ENCODE measurements at regions of chr17 and their contacts with region 1.

Region 1: DNA sequence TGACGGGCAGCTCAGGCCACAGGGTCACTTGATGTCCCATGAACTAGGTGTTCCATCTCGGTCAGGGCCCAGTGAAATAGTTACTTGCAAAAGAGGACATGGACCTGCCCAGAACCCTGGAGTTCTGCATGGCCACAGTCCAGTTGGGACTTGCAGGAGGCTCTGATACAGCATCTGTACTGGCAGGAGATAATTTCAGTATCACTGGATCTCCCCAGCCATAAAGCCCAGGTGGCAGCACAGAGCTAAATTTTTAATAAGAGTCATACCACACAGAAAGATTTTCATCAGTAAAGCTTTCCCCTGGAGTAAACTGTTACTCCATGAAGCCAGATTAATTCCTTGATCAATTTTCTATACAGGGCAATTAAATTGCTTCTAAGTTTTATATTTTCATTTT is 18.0 kb upstream of the SLC16A5 start:
- DNase-seq: peak; percentile 68 to 78
- ATAC-seq: peak; percentile 80 to 83
- H3K4me3 ChIP-seq: no peak overlapping the region
- H3K27ac ChIP-seq: no peak overlapping the region; a peak in 1 of 6 replicates
- H3K4me1 ChIP-seq: peaks cover 3% of the 10 kb centered on the region; the same call in 1 of the 3 replicates
- CTCF ChIP-seq: peak; percentile 78
- EP300 ChIP-seq: no peak
- POLR2A ChIP-seq: no peak
- RAD21 ChIP-seq: peak; percentile 80 to 83

Region 2: DNA sequence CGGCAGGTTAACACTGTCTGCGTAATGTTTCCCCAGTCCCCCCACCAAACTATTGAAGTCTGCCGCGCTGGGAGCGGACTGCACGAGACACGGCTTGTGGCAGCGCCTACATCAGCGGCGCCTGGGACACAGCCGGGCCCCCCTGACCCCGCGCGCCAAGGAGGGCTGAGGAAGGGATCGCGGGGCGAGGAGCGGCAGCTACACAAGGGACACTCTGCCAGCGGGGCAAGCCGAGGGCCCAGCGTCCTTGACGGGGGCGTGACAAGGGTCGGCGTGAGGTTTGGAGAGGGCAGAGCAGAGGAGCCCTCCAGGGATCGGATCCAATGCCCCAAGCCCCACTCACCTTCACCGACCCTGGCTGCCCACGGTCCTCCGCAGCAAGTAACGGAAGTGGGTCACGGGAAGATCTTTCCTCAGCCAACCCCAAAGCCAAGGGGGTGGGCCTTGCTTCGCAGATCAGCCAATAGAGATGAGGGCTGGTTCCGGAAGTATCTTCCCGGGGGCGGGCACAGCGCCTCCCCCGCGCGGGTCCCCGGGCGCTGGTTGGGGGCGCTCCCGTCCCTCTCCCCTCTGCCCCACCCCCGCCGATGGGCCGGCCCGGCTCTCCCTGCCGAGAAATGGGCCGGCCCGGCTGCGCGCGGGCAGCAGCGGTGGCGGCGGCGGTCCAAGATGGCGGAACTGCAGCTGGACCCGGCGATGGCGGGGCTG is 23.0 kb before region 1 on chr17 and contains the starts of genes ATP5PD and KCTD2:
- CTCF ChIA-PET with region 1: interaction called, 13 read pairs
- POLR2A ChIA-PET with region 1: interaction called, 9 read pairs
- DNase-seq: peak; percentile 98 to 99
- ATAC-seq: peak; percentile 98 to 99
- H3K4me3 ChIP-seq: peak within 1 kb of the TSS; percentile 94
- H3K27ac ChIP-seq: peak within 1 kb of the TSS; percentile 93 to 97
- H3K4me1 ChIP-seq: peaks cover 16% of the 10 kb centered on the region
- CTCF ChIP-seq: no peak
- EP300 ChIP-seq: no peak
- POLR2A ChIP-seq: peak; percentile 90
- RAD21 ChIP-seq: 0 out of 5 replicates have a peak, but pooled peaks of 1 of the 2 experiments have one; percentile 21
- polyA plus RNA-seq, gene ATP5PD: 314 and 333 TPM in 2 replicates
- polyA plus RNA-seq, gene KCTD2: 31.3 and 34.1 TPM in 2 replicates

Region 3: DNA sequence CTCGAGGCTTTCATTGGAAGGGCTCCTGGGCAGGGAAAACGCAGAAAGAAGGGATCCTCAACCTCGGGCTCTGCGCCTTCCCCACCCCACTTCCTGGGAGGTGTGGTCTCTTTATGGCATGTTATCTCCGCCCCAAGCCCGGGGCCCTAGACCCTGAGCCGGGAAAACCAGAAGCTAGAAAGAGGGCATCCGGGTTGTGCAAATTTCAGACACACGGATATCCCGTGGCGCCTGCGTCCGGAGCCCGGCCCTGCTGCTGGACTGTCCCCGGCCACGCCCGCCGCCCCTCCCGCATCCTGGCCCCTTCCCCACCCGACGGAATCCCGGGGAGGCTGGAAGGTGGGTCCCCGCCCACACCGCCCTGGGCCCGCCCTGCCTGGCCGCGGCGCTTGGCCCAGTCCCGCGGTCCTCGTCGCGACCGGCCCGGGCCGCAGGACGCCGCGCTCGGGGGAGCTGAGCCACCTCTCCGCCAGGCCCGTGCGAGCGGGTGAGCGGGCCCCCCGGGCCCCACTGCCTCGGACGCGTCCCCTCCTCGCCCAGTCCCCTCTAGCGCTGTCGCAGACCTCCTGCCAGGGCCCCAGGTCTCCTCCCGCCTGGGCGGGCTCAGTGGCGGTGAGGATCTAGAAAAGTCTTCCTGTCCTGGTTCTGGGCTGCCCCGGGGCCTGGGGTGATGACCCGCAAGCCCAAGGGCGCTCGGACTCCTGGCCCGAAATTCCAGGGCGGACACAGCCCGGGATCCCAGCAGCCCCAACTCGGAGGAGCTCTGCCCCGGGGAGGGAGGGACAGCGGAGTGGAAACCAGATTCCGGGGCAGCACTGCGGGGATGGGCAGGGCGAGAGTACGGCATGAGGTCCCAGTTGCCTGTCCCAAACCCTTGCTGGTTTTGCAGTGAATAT is 18.0 kb after region 1 on chr17 and contains the start of gene SLC16A5:
- CTCF ChIA-PET with region 1: interaction called, 3,429 read pairs
- POLR2A ChIA-PET with region 1: interaction called, 21 read pairs
- DNase-seq: peak; percentile 95 to 99
- ATAC-seq: peak; percentile 75 to 82
- H3K4me3 ChIP-seq: peak within 1 kb of the TSS; percentile 67
- H3K27ac ChIP-seq: peak within 1 kb of the TSS; percentile 95 to 96
- H3K4me1 ChIP-seq: peaks cover 77% of the 10 kb centered on the region
- CTCF ChIP-seq: no peak
- EP300 ChIP-seq: no peak
- POLR2A ChIP-seq: peak; percentile 87
- RAD21 ChIP-seq: peak in 1 of 2 experiments; percentile 28; a peak in 1 of 5 replicates
- polyA plus RNA-seq, gene SLC16A5: 19.0 and 20.1 TPM in 2 replicates

Region 4: DNA sequence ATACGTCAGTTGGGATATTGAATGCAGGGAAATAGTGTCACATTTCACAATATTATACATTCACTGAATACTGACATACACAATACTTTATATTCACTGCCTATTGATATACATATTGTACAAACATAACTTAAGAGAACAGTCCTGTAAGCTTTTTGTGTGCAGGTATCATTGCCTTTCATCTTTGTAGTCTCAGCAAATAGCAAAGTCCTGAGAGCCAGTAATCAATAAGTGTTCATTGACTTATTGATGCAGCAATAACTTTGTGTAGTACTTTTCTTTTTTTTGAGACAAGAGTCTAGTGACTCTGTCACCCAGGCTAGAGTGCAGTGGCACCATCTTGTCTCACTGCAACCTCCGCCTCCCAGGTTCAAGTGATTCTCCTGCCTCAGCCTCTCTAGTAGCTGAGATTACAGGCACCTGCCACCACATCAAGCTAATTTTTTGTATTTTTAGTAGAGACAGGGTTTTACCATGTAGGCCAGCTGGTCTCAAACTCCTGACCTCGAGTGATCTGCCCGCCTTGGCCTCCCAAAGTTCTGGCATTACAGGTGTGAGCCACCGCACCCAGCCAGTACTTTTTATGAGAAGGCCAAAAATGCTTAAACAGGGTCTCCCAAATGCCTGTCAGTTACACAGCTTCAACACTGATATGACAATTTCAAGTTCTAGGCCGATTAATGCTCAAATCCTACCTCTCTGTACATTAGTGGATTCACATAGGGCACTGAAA is 130.3 kb after region 1 on chr17:
- CTCF ChIA-PET with region 1: interaction called, 34 read pairs
- POLR2A ChIA-PET with region 1: interaction called, 3 read pairs
- DNase-seq: no peak
- ATAC-seq: no peak
- H3K4me3 ChIP-seq: no peak overlapping the region
- H3K27ac ChIP-seq: no peak overlapping the region
- H3K4me1 ChIP-seq: peaks cover 4% of the 10 kb centered on the region; the same call in 1 of the 3 replicates
- CTCF ChIP-seq: no peak
- EP300 ChIP-seq: no peak
- POLR2A ChIP-seq: no peak
- RAD21 ChIP-seq: no peak

Measured in A549 (cell line).